ENCODE measurements at regions of chr12 and their contacts with region 1.

Region 1: GRCh38 chr12:12916135-12916944 is 25.0 kb downstream of the GPRC5A start:
- DNase-seq: peak; percentile 87 to 92
- H3K4me3 ChIP-seq: no peak overlapping the region
- H3K4me3 Mint-ChIP-seq: no peak overlapping the region
- H3K27ac Mint-ChIP-seq: no peak overlapping the region
- H3K4me1 ChIP-seq: peaks cover 7% of the 10 kb centered on the region
- H3K4me1 Mint-ChIP-seq: peaks cover 24% of the 10 kb centered on the region
- H3K27me3 ChIP-seq: no peaks in the 10 kb centered on the region
- H3K27me3 Mint-ChIP-seq: no peaks in the 10 kb centered on the region
- CTCF ChIP-seq: peak; percentile 98 to 99

Region 2: DNA sequence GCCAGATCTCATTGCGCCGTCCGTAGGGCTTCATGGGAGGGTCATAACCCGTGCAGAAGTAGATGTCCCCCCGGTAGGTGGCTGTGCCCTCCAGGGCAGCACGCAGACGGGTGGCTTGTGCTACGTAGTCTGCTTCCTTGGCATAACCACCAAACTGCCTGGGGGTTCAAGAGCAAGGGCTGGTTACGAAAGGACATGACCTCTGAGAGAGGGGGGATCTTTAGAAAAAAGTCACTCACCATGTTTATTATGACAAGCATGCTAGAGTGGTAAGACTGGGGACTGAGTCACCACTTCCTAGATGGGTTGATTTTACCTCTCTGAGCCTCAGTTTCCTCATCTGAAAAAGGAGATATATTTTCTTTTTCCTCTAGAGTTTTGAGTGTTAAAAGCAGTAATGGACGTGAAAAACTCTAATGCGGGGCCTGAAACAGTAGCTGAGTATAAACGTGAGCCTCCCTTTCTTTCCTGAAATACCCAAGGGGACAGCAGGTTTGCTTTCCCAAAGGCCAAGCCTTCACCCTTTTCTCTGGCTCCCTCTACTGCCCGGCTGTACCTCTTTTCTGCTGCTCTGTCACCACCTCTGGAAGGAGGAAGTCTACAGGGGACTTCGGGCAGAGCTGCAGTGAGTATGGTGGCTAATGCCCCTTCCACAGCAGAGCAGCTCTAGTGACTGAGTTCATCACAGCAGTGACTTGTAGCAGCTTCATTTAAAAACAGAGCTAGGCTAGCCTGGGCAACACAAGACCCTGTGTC is 59.2 kb after region 1 on chr12:
- CTCF ChIA-PET with region 1: interaction called, 18 read pairs
- POLR2A ChIA-PET with region 1: no interaction called
- intact Hi-C with region 1: loop called (anchors 1 kb)
- DNase-seq: peak; percentile 70 to 74
- H3K4me3 ChIP-seq: no peak overlapping the region
- H3K4me3 Mint-ChIP-seq: no peak overlapping the region
- H3K27ac Mint-ChIP-seq: no peak overlapping the region
- H3K4me1 ChIP-seq: peaks cover 21% of the 10 kb centered on the region
- H3K4me1 Mint-ChIP-seq: peaks cover 6% of the 10 kb centered on the region
- H3K27me3 ChIP-seq: no peaks in the 10 kb centered on the region
- H3K27me3 Mint-ChIP-seq: no peaks in the 10 kb centered on the region
- CTCF ChIP-seq: peak; percentile 46 to 78

Region 3: DNA sequence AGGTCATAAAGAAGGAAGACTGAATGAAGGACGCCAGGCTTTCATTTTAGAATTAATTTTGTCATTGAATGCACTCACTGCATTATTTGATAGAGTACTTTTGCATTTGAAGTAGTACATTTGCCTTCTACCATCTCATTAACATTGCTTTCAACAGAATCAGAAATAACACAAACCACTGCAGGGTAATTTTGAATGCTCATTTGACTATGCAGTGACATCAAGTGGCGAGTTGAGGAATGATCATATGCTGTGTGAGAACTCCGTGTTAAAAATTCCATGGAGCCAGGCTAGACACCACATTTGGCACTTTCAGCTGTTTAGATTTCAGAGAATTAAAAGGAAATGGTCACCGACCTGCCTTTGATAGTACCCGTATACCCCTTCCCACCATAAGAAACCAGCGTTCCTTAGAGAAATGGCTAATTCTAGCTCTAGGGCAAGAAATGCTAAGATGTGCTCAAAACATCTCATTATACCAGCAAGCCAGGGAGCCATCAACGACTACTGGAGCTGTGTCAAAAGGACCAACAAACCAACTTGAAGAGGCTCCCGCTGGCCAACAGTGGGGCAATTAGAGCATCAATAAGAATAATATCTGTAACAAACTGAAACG is 67.2 kb after region 1 on chr12:
- CTCF ChIA-PET with region 1: interaction called, 18 read pairs
- POLR2A ChIA-PET with region 1: no interaction called
- intact Hi-C with region 1: loop called (anchors 1 kb)
- DNase-seq: peak in 1 of 2 experiments; percentile 70
- H3K4me3 ChIP-seq: no peak overlapping the region
- H3K4me3 Mint-ChIP-seq: no peak overlapping the region
- H3K27ac Mint-ChIP-seq: no peak overlapping the region
- H3K4me1 ChIP-seq: peaks cover 23% of the 10 kb centered on the region
- H3K4me1 Mint-ChIP-seq: no peaks in the 10 kb centered on the region
- H3K27me3 ChIP-seq: no peaks in the 10 kb centered on the region
- H3K27me3 Mint-ChIP-seq: no peaks in the 10 kb centered on the region
- CTCF ChIP-seq: peak; percentile 75 to 78

Region 4: GRCh38 chr12:13071305-13072280 is 155.3 kb after region 1 on chr12:
- CTCF ChIA-PET with region 1: no interaction called
- POLR2A ChIA-PET with region 1: no interaction called
- intact Hi-C with region 1: no loop called
- DNase-seq: no peak
- H3K4me3 ChIP-seq: no peak overlapping the region
- H3K4me3 Mint-ChIP-seq: no peak overlapping the region
- H3K27ac Mint-ChIP-seq: no peak overlapping the region
- H3K4me1 ChIP-seq: peaks cover 4% of the 10 kb centered on the region; the same call in 1 of the 2 replicates
- H3K4me1 Mint-ChIP-seq: peaks cover 6% of the 10 kb centered on the region
- H3K27me3 ChIP-seq: no peaks in the 10 kb centered on the region
- H3K27me3 Mint-ChIP-seq: no peaks in the 10 kb centered on the region
- CTCF ChIP-seq: no peak

Region 5: GRCh38 chr12:13233830-13234641 is 317.7 kb after region 1 on chr12:
- CTCF ChIA-PET with region 1: interaction called, 3 read pairs
- POLR2A ChIA-PET with region 1: no interaction called
- intact Hi-C with region 1: loop called (anchors 1 kb)
- DNase-seq: peak; percentile 58 to 75
- H3K4me3 ChIP-seq: no peak overlapping the region
- H3K4me3 Mint-ChIP-seq: no peak overlapping the region
- H3K27ac Mint-ChIP-seq: no peak overlapping the region
- H3K4me1 ChIP-seq: no peaks in the 10 kb centered on the region
- H3K4me1 Mint-ChIP-seq: peaks cover 13% of the 10 kb centered on the region
- H3K27me3 ChIP-seq: no peaks in the 10 kb centered on the region
- H3K27me3 Mint-ChIP-seq: peaks cover 4% of the 10 kb centered on the region
- CTCF ChIP-seq: peak; percentile 95 to 96

Measured in Caco-2 (cell line).